ENCODE measurements at regions of chr17 and their contacts with region 1.

Region 1: GRCh38 chr17:28494445-28495188 is 11.5 kb upstream of the FOXN1 start:
- DNase-seq: peak; percentile 81 to 89 (median 88)
- ATAC-seq: peak; percentile 94
- H3K4me3 ChIP-seq: no peak overlapping the region
- H3K27ac ChIP-seq: no peak overlapping the region
- H3K4me1 ChIP-seq: peaks cover 0 to 10% of the 10 kb centered on the region in 2 experiments; a peak in 1 of 5 replicates
- H3K27me3 ChIP-seq: peaks cover 6 to 47% of the 10 kb centered on the region in 2 experiments; a peak in 4 of 5 replicates
- CTCF ChIP-seq: peak; percentile 91 to 96 (median 91)
- EP300 ChIP-seq: no peak
- POLR2A ChIP-seq: no peak
- RAD21 ChIP-seq: peak; percentile 89 to 97

Region 2: DNA sequence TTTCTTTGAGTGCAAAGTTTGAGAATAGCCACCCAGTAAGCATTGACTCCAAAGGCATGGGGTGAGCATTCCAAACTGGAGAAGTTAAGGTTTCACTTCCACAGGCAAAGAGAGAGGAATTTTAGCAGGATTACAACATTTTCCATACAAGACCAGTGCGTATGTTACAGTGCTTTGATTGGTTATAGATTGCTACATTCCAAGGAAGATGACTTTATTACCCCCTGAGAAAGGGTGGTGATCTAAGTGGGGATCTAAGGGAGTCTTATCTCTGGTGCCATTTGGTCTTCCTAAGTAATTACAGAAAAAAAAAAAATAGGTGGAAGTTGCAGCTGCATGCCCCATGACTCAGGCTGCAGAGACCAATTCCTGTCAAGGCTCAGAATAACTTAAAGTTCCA is 99.9 kb before region 1 on chr17:
- CTCF ChIA-PET with region 1: no interaction called
- POLR2A ChIA-PET with region 1: no interaction called
- in situ Hi-C with region 1: no loop called
- intact Hi-C with region 1: no loop called
- DNase-seq: peak in 1 of 4 experiments; percentile 17
- ATAC-seq: no peak
- H3K4me3 ChIP-seq: no peak overlapping the region
- H3K27ac ChIP-seq: no peak overlapping the region
- H3K4me1 ChIP-seq: peaks cover 9 to 11% of the 10 kb centered on the region in 2 experiments; a peak in 4 of 5 replicates
- H3K27me3 ChIP-seq: no peaks in the 10 kb centered on the region
- CTCF ChIP-seq: no peak
- EP300 ChIP-seq: no peak
- POLR2A ChIP-seq: no peak
- RAD21 ChIP-seq: no peak

Region 3: GRCh38 chr17:28540231-28540630 is 45.6 kb after region 1 on chr17:
- CTCF ChIA-PET with region 1: interaction called, 69 read pairs
- POLR2A ChIA-PET with region 1: interaction called, 3 read pairs
- in situ Hi-C with region 1: loop called (anchors 5 kb)
- intact Hi-C with region 1: loop called (anchors 1 kb)
- DNase-seq: no peak
- ATAC-seq: no peak
- H3K4me3 ChIP-seq: no peak overlapping the region
- H3K27ac ChIP-seq: no peak overlapping the region
- H3K4me1 ChIP-seq: peaks cover 0 to 3% of the 10 kb centered on the region in 2 experiments; a peak in 2 of 5 replicates
- H3K27me3 ChIP-seq: peaks cover 4 to 29% of the 10 kb centered on the region in 2 experiments; a peak in 4 of 5 replicates
- CTCF ChIP-seq: no peak
- EP300 ChIP-seq: no peak
- POLR2A ChIP-seq: no peak
- RAD21 ChIP-seq: no peak

Region 4: GRCh38 chr17:28612936-28613872 is 118.6 kb after region 1 on chr17:
- CTCF ChIA-PET with region 1: interaction called, 16 read pairs
- POLR2A ChIA-PET with region 1: interaction called, 3 read pairs
- in situ Hi-C with region 1: no loop called
- intact Hi-C with region 1: loop called (anchors 2 kb)
- DNase-seq: peak; percentile 58 to 68 (median 66)
- ATAC-seq: peak; percentile 88
- H3K4me3 ChIP-seq: no peak overlapping the region
- H3K27ac ChIP-seq: no peak overlapping the region
- H3K4me1 ChIP-seq: no peaks in the 10 kb centered on the region
- H3K27me3 ChIP-seq: no peaks in the 10 kb centered on the region
- CTCF ChIP-seq: peak; percentile 76 to 87 (median 84)
- EP300 ChIP-seq: no peak
- POLR2A ChIP-seq: no peak; the same call in 1 of the 2 replicates
- RAD21 ChIP-seq: peak; percentile 53 to 72